Activated CD4-positive, alpha-beta T cell treated with anti-CD3 and anti-CD28 coated beads, Interleukin-2, amount 10 ng/mL, durations not matched to agents 24 days and 14 days (primary cell): ENCODE measurements at regions of chr15 and their contacts with region 1.

Region 1: GRCh38 chr15:60179786-60180391 is 175.8 kb downstream of the FOXB1 start:
- DNase-seq: peak; percentile 77
- H3K4me3 Mint-ChIP-seq: no peak overlapping the region
- H3K27ac Mint-ChIP-seq: no peak overlapping the region
- H3K4me1 Mint-ChIP-seq: no peaks in the 10 kb centered on the region
- H3K27me3 Mint-ChIP-seq: peaks cover 33% of the 10 kb centered on the region

Region 2: DNA sequence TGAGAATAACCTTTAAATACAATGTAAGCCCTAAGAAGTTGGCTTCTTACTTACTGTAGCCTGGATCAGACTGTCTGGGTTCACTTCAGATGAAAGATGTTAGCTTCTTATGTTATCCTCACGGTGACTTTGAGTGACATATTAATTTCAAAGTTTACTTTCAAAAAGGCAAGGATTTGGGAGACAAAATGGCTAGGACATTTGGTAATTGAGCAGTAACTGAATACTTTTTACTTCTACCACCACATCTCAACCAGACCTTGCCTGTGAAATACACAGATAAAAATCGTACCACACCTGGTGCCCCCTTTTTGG is 454.8 kb before region 1 on chr15:
- intact Hi-C with region 1: loop called (anchors 10 kb)
- DNase-seq: no peak
- H3K4me3 Mint-ChIP-seq: no peak overlapping the region
- H3K27ac Mint-ChIP-seq: no peak overlapping the region
- H3K4me1 Mint-ChIP-seq: peaks cover 2% of the 10 kb centered on the region
- H3K27me3 Mint-ChIP-seq: peaks cover 23% of the 10 kb centered on the region

Region 3: DNA sequence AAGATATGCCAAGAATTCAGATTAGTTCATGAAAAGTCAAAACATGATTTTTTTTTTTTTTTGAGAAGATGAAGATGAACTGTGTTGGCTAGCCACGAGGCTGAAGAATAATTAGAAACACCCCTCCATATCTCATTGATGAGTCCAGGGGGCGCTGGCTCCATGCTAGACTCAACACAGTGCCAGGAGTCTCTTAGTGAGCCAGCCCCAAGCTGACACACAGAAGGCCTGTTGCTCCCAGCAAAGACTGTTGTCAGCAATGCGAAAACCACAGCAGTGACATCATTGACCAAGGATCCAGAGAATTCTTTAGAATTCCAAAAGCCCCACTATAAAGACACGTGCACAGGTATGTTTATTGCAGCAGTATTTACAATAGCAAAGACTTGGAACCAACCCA is 32.6 kb after region 1 on chr15:
- intact Hi-C with region 1: no loop called
- DNase-seq: no peak
- H3K4me3 Mint-ChIP-seq: no peak overlapping the region
- H3K27ac Mint-ChIP-seq: no peak overlapping the region
- H3K4me1 Mint-ChIP-seq: no peaks in the 10 kb centered on the region
- H3K27me3 Mint-ChIP-seq: peaks cover 28% of the 10 kb centered on the region